Vagina (tissue), 2 donors: ENCODE measurements at regions of chr18 and their contacts with region 1.

Region 1: GRCh38 chr18:9951022-9951859 is 37.4 kb downstream of the VAPA start:
- DNase-seq: no peak
- H3K4me3 ChIP-seq: no peak overlapping the region
- H3K27ac ChIP-seq: no peak overlapping the region
- H3K4me1 ChIP-seq: peaks cover 9% of the 10 kb centered on the region
- H3K27me3 ChIP-seq: no peaks in the 10 kb centered on the region
- CTCF ChIP-seq: peak in 2 of 3 experiments; percentile 27 to 51
- POLR2A ChIP-seq: no peak

Region 2: GRCh38 chr18:9690418-9691188 is 260.6 kb before region 1 on chr18:
- intact Hi-C with region 1: loop called (anchors 10 kb)
- DNase-seq: no peak
- H3K4me3 ChIP-seq: no peak overlapping the region
- H3K27ac ChIP-seq: no peak overlapping the region
- H3K4me1 ChIP-seq: peaks cover 2% of the 10 kb centered on the region
- H3K27me3 ChIP-seq: no peaks in the 10 kb centered on the region
- CTCF ChIP-seq: no peak
- POLR2A ChIP-seq: no peak

Region 3: DNA sequence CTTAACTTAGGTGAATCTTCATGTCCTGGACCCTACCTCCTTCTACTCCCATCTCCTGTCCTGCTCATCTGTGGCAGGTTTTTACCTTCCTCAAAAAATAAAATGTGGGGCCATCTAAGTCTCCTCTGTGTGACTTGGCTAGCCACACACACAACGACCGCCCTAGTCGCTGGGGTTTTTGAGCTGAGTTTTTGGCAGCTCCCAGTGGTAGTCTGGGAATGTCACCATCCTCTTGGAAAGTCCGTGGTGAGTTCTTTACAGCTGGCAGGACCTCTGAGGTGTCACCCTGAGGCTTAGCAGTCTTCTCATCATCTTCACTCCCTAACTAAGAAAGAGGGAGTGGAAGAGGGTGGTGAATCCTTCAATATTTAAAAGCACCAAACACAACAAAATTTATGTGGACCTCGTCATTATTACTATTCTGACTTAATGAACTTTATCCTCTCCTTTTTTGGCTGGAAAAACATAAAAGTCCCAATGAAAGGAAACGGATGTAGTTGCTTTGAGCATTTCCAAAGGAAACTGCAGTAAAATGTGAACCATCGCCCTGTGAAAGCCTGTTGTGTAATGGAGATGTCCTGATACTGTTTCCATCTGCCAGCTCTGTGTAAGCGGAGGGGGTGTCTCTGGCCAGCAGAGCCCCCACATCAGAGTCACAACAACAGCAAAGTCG is 41.2 kb after region 1 on chr18:
- intact Hi-C with region 1: no loop called
- DNase-seq: peak; percentile 70 to 90
- H3K4me3 ChIP-seq: no peak overlapping the region
- H3K27ac ChIP-seq: peak overlapping the region; percentile 39
- H3K4me1 ChIP-seq: peaks cover 34% of the 10 kb centered on the region
- H3K27me3 ChIP-seq: no peaks in the 10 kb centered on the region
- CTCF ChIP-seq: no peak
- POLR2A ChIP-seq: no peak